B cell (primary cell): ENCODE measurements at regions of chr12 and their contacts with region 1.

Region 1: DNA sequence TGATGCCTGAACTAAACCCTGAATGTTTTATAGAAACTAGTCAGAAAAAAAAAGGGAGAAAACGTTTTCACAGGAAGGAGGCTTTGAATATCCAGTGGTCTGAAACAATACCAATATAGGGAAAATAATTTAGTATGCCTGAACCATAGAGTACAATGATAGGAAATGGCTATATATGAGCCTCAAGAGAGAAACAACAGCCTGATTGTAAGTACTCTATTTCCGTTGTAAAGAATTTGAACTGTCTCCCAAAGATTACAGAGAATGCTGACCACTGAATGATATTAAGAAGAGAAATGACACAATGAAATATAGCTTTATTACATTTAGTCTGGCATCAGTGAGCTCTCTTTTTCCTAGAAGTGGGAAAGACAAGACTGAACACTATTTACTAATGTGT is 5.5 kb upstream of the GABARAPL1 start:
- DNase-seq: no peak
- ATAC-seq: no peak
- H3K4me3 ChIP-seq: no peak overlapping the region
- H3K4me3 Mint-ChIP-seq: no peak overlapping the region
- H3K27ac ChIP-seq: no peak overlapping the region
- H3K27ac Mint-ChIP-seq: no peak overlapping the region
- H3K4me1 ChIP-seq: peaks cover 3 to 7% of the 10 kb centered on the region in 2 donors
- H3K4me1 Mint-ChIP-seq: peaks cover 11% of the 10 kb centered on the region
- H3K27me3 ChIP-seq: peaks cover 0 to 8% (median 3%) of the 10 kb centered on the region in 4 experiments
- H3K27me3 Mint-ChIP-seq: peaks cover 17% of the 10 kb centered on the region
- CTCF ChIP-seq: no peak

Region 2: DNA sequence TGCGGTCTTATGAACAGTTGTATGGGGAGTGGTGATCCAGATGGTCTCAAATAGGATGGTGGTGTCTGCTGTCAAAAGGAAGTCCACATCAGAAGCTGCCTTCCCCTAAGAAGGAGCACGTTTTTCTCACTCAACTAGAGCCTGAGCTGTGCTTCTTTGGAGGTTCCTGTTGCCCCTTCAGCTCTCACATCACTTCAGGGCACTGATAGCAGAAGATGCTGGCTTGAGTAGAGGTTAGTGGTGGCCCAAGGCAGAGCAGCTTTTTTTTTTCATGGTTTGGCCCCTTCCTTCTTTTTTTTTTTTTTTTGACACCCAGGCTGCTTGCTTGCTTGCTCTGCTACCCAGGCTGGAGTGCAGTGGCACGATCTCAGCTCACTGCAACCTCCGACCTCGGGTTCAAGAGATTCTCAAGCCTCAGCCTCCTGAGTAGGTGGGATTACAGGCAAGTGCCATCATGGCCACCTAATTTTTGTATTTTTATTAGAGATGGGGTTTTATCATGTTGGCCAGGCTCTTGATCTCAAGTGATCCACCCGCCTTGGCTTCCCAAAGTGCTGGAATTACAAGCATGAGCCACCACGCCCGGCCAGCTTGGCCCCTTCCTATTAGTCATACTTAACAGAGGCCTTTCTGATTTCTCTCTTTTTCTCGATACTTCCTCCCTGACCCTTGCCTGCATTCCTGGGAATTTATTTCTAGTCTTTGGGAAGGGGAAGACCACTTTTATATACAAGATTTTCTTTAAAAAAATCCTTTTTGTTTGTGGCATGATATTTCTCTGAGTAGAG is 132.1 kb after region 1 on chr12:
- CTCF ChIA-PET with region 1: no interaction called
- POLR2A ChIA-PET with region 1: no interaction called
- intact Hi-C with region 1: no loop called
- DNase-seq: no peak
- ATAC-seq: no peak
- H3K4me3 ChIP-seq: no peak overlapping the region
- H3K4me3 Mint-ChIP-seq: no peak overlapping the region
- H3K27ac ChIP-seq: no peak overlapping the region
- H3K27ac Mint-ChIP-seq: peak overlapping the region; percentile 39
- H3K4me1 ChIP-seq: peaks cover 6 to 7% of the 10 kb centered on the region in 2 donors
- H3K4me1 Mint-ChIP-seq: peaks cover 15% of the 10 kb centered on the region
- H3K27me3 ChIP-seq: no peaks in the 10 kb centered on the region
- H3K27me3 Mint-ChIP-seq: no peaks in the 10 kb centered on the region
- CTCF ChIP-seq: no peak

Region 3: GRCh38 chr12:10919809-10920208 is 712.7 kb after region 1 on chr12:
- CTCF ChIA-PET with region 1: no interaction called
- POLR2A ChIA-PET with region 1: interaction called, 12 read pairs
- intact Hi-C with region 1: no loop called
- DNase-seq: no peak
- ATAC-seq: no peak
- H3K4me3 ChIP-seq: no peak overlapping the region
- H3K4me3 Mint-ChIP-seq: no peak overlapping the region
- H3K27ac ChIP-seq: no peak overlapping the region
- H3K27ac Mint-ChIP-seq: no peak overlapping the region
- H3K4me1 ChIP-seq: no peaks in the 10 kb centered on the region
- H3K4me1 Mint-ChIP-seq: no peaks in the 10 kb centered on the region
- H3K27me3 ChIP-seq: no peaks in the 10 kb centered on the region
- H3K27me3 Mint-ChIP-seq: no peaks in the 10 kb centered on the region
- CTCF ChIP-seq: no peak